Prostate gland (tissue), 2 donors: ENCODE measurements at regions of chr18 and their contacts with region 1.

Region 1: GRCh38 chr18:24885276-24885675 is 424.8 kb downstream of the HRH4 start:
- DNase-seq: no peak
- H3K4me3 ChIP-seq: no peak overlapping the region
- H3K27ac ChIP-seq: no peak overlapping the region
- H3K4me1 ChIP-seq: no peaks in the 10 kb centered on the region
- H3K27me3 ChIP-seq: no peaks in the 10 kb centered on the region
- CTCF ChIP-seq: no peak
- POLR2A ChIP-seq: no peak

Region 2: GRCh38 chr18:25247725-25248124 is 362.4 kb after region 1 on chr18:
- intact Hi-C with region 1: no loop called
- DNase-seq: no peak
- H3K4me3 ChIP-seq: no peak overlapping the region
- H3K27ac ChIP-seq: no peak overlapping the region
- H3K4me1 ChIP-seq: no peaks in the 10 kb centered on the region
- H3K27me3 ChIP-seq: no peaks in the 10 kb centered on the region
- CTCF ChIP-seq: no peak
- POLR2A ChIP-seq: no peak

Region 3: GRCh38 chr18:25669741-25670140 is 784.5 kb after region 1 on chr18:
- intact Hi-C with region 1: loop called (anchors 10 kb)
- DNase-seq: no peak
- H3K4me3 ChIP-seq: no peak overlapping the region
- H3K27ac ChIP-seq: no peak overlapping the region
- H3K4me1 ChIP-seq: no peaks in the 10 kb centered on the region
- H3K27me3 ChIP-seq: no peaks in the 10 kb centered on the region
- CTCF ChIP-seq: peak in 2 of 4 experiments; percentile 16 to 54
- POLR2A ChIP-seq: no peak